CD4-positive, alpha-beta T cell (primary cell): ENCODE measurements at regions of chr17 and their contacts with region 1.

Region 1: GRCh38 chr17:43316522-43317142 is 82.2 kb upstream of the ARL4D start:
- DNase-seq: peak in 3 of 14 experiments; percentile 23 to 66 (median 42)
- ATAC-seq: no peak
- H3K4me3 ChIP-seq: no peak overlapping the region
- H3K4me3 Mint-ChIP-seq: peak overlapping the region; percentile 20
- H3K27ac ChIP-seq: no peak overlapping the region
- H3K27ac Mint-ChIP-seq: no peak overlapping the region
- H3K4me1 ChIP-seq: no peaks in the 10 kb centered on the region
- H3K4me1 Mint-ChIP-seq: peaks cover 4% of the 10 kb centered on the region
- H3K27me3 ChIP-seq: no peaks in the 10 kb centered on the region
- H3K27me3 Mint-ChIP-seq: no peaks in the 10 kb centered on the region
- CTCF ChIP-seq: no peak

Region 2: GRCh38 chr17:43125133-43125966 is 191.3 kb before region 1 on chr17 and contains the start of gene BRCA1:
- CTCF ChIA-PET with region 1: no interaction called
- POLR2A ChIA-PET with region 1: interaction called, 4 read pairs
- intact Hi-C with region 1: loop called in 1 of 2 experiments (anchors 5 kb)
- DNase-seq: peak; percentile 86 to 99 (median 90)
- ATAC-seq: peak; percentile 99
- H3K4me3 ChIP-seq: peak within 1 kb of the TSS; percentile 77
- H3K4me3 Mint-ChIP-seq: peak within 1 kb of the TSS; percentile 86
- H3K27ac ChIP-seq: peak within 1 kb of the TSS; percentile 55 to 83
- H3K27ac Mint-ChIP-seq: peak within 1 kb of the TSS; percentile 71
- H3K4me1 ChIP-seq: peaks cover 18% of the 10 kb centered on the region
- H3K4me1 Mint-ChIP-seq: peaks cover 23% of the 10 kb centered on the region
- H3K27me3 ChIP-seq: no peaks in the 10 kb centered on the region
- H3K27me3 Mint-ChIP-seq: no peaks in the 10 kb centered on the region
- CTCF ChIP-seq: no peak
- total RNA-seq, gene BRCA1: 1.2 to 1.3 TPM

Region 3: GRCh38 chr17:43211480-43212402 is 104.9 kb before region 1 on chr17 and contains the start of gene TMEM106A:
- CTCF ChIA-PET with region 1: interaction called, 11 read pairs
- POLR2A ChIA-PET with region 1: interaction called, 78 read pairs
- intact Hi-C with region 1: loop called in 1 of 2 experiments (anchors 2 kb)
- DNase-seq: peak; percentile 56 to 88 (median 68)
- ATAC-seq: peak; percentile 90
- H3K4me3 ChIP-seq: peak within 1 kb of the TSS; percentile 69
- H3K4me3 Mint-ChIP-seq: peak within 1 kb of the TSS; percentile 98
- H3K27ac ChIP-seq: peak within 1 kb of the TSS; percentile 72 to 77
- H3K27ac Mint-ChIP-seq: peak within 1 kb of the TSS; percentile 89
- H3K4me1 ChIP-seq: peaks cover 22% of the 10 kb centered on the region
- H3K4me1 Mint-ChIP-seq: peaks cover 38% of the 10 kb centered on the region
- H3K27me3 ChIP-seq: no peaks in the 10 kb centered on the region
- H3K27me3 Mint-ChIP-seq: no peaks in the 10 kb centered on the region
- CTCF ChIP-seq: peak; percentile 61
- total RNA-seq, gene TMEM106A: 6.3 to 6.4 TPM

Region 4: GRCh38 chr17:43338886-43339516 is 22.4 kb after region 1 on chr17:
- CTCF ChIA-PET with region 1: interaction called, 6 read pairs
- POLR2A ChIA-PET with region 1: interaction called, 16 read pairs
- intact Hi-C with region 1: no loop called
- DNase-seq: peak; percentile 48 to 75 (median 58)
- ATAC-seq: no peak
- H3K4me3 ChIP-seq: no peak overlapping the region
- H3K4me3 Mint-ChIP-seq: no peak overlapping the region
- H3K27ac ChIP-seq: no peak overlapping the region
- H3K27ac Mint-ChIP-seq: no peak overlapping the region
- H3K4me1 ChIP-seq: peaks cover 8% of the 10 kb centered on the region
- H3K4me1 Mint-ChIP-seq: peaks cover 8% of the 10 kb centered on the region
- H3K27me3 ChIP-seq: no peaks in the 10 kb centered on the region
- H3K27me3 Mint-ChIP-seq: no peaks in the 10 kb centered on the region
- CTCF ChIP-seq: peak; percentile 79

Region 5: DNA sequence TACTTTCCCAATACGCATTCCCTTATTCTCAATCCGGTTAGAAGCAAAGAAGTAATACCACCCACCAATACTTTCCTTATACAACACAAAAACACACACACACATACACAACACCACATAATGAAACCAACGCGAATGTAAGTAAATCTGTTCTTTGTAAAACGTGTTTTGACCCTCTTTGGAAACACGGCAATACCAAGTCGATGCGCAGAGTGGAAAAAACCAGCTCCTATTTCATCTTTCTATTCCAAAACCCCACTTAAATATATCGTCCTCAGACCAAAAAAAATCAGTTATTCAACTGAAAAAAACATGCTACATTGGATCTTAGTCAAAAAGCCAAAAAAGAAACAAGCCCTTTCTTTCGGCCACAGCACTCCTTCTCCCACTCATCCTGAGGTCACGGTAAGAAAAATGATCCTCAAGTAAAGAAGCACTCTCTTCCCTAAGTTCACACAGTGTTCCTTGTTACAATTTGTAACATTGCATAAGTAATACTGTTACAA is 51.2 kb after region 1 on chr17:
- CTCF ChIA-PET with region 1: no interaction called
- POLR2A ChIA-PET with region 1: interaction called, 132 read pairs
- intact Hi-C with region 1: loop called in 1 of 2 experiments (anchors 2 kb)
- DNase-seq: peak in 2 of 14 experiments; percentile 70 to 88
- ATAC-seq: peak; percentile 47
- H3K4me3 ChIP-seq: peak overlapping the region; percentile 83
- H3K4me3 Mint-ChIP-seq: peak overlapping the region; percentile 95
- H3K27ac ChIP-seq: peak overlapping the region; percentile 86 to 97
- H3K27ac Mint-ChIP-seq: peak overlapping the region; percentile 98
- H3K4me1 ChIP-seq: peaks cover 38% of the 10 kb centered on the region
- H3K4me1 Mint-ChIP-seq: peaks cover 48% of the 10 kb centered on the region
- H3K27me3 ChIP-seq: no peaks in the 10 kb centered on the region
- H3K27me3 Mint-ChIP-seq: no peaks in the 10 kb centered on the region
- CTCF ChIP-seq: no peak

Region 6: DNA sequence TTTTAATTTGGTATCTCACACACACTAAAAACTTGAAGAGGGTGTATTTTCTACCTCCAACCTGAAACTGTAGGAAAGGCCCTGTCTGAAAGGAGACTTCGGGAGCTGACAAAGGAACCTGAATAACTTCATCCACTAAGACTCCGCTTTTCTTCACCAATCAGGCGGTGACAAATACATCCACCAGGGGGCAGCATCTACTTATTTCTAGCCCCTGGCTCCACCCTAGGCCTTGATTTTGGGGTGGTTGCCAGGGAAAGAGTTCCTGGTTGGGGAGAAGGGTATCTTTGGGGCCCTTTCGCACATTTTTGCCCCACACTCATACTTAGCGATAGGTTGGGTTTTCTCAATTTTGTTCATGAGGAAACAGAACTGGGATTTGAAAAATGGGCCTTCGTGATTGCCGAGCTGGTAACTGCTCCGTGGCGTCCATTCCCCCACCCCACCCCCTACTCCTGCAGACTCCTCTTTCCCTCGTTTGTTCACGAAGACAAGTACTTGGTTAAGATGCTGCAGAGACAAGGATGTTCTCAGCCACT is 77.4 kb after region 1 on chr17:
- CTCF ChIA-PET with region 1: no interaction called
- POLR2A ChIA-PET with region 1: interaction called, 11 read pairs
- intact Hi-C with region 1: no loop called
- DNase-seq: peak; percentile 77 to 94 (median 89)
- ATAC-seq: peak; percentile 27
- H3K4me3 ChIP-seq: no peak overlapping the region
- H3K4me3 Mint-ChIP-seq: peak overlapping the region; percentile 49
- H3K27ac ChIP-seq: peak overlapping the region in 1 of 2 donors; percentile 14
- H3K27ac Mint-ChIP-seq: peak overlapping the region; percentile 16
- H3K4me1 ChIP-seq: peaks cover 40% of the 10 kb centered on the region
- H3K4me1 Mint-ChIP-seq: peaks cover 37% of the 10 kb centered on the region
- H3K27me3 ChIP-seq: no peaks in the 10 kb centered on the region
- H3K27me3 Mint-ChIP-seq: no peaks in the 10 kb centered on the region
- CTCF ChIP-seq: peak; percentile 90